HepG2 (cell line): ENCODE measurements at regions of chr1 and their contacts with region 1.

Region 1: DNA sequence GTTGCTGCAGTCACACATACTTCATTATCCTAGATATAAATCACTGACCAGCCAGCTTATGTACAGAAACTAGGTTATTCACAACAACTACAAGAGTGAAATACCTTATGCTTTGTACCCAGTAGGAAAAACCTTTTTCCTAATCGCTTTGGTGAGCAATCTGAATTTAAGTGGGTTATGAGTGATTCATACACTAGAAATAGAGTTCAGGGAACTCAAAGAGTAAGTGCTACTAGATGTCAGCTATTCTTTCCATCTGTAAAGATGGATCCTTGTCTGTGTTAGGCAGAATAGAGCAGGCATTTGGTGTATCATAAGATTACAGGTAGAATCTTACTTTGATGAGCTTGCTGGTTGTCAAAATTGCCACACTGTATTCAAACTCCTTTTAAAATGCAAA is 101.9 kb downstream of the ZNF644 start:
- DNase-seq: no peak
- ATAC-seq: no peak
- H3K4me3 ChIP-seq: no peak overlapping the region
- H3K27ac ChIP-seq: no peak overlapping the region
- H3K4me1 ChIP-seq: peaks cover 16% of the 10 kb centered on the region
- H3K27me3 ChIP-seq: no peaks in the 10 kb centered on the region
- CTCF ChIP-seq: no peak
- EP300 ChIP-seq: no peak
- POLR2A ChIP-seq: no peak
- RAD21 ChIP-seq: no peak

Region 2: DNA sequence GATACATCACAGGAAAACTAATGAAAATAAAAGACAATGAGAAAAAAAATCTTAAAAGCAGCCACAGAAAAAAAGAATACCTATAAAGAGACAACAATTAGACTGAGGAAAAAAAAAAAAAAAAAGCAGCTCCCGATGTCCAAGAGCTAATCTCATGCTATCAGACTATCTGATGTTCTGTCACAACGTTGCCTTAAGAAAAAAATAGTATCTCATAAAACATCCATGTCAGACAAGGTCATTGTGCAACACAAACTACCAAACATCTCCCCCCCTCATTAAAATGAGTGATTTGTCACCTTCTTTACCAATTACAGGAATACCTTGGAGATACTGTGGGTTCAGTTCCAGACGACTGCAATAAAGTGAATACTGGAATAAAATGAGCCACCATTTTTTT is 33.0 kb after region 1 on chr1:
- CTCF ChIA-PET with region 1: no interaction called
- POLR2A ChIA-PET with region 1: no interaction called
- in situ Hi-C with region 1: no loop called
- intact Hi-C with region 1: loop called (anchors 1 kb)
- DNase-seq: no peak
- ATAC-seq: no peak
- H3K4me3 ChIP-seq: no peak overlapping the region
- H3K27ac ChIP-seq: no peak overlapping the region
- H3K4me1 ChIP-seq: no peaks in the 10 kb centered on the region
- H3K27me3 ChIP-seq: no peaks in the 10 kb centered on the region
- CTCF ChIP-seq: no peak
- EP300 ChIP-seq: no peak
- POLR2A ChIP-seq: no peak
- RAD21 ChIP-seq: no peak